GM13977 (cell line): ENCODE measurements at regions of chr11 and their contacts with region 1.

Region 1: GRCh38 chr11:46242916-46243795 is 34.3 kb upstream of the CREB3L1 start:
- DNase-seq: peak; percentile 96
- CTCF ChIP-seq: no peak

Region 2: GRCh38 chr11:46121724-46122477 is 121.3 kb before region 1 on chr11:
- in situ Hi-C with region 1: no loop called
- DNase-seq: peak; percentile 45
- CTCF ChIP-seq: no peak

Region 3: DNA sequence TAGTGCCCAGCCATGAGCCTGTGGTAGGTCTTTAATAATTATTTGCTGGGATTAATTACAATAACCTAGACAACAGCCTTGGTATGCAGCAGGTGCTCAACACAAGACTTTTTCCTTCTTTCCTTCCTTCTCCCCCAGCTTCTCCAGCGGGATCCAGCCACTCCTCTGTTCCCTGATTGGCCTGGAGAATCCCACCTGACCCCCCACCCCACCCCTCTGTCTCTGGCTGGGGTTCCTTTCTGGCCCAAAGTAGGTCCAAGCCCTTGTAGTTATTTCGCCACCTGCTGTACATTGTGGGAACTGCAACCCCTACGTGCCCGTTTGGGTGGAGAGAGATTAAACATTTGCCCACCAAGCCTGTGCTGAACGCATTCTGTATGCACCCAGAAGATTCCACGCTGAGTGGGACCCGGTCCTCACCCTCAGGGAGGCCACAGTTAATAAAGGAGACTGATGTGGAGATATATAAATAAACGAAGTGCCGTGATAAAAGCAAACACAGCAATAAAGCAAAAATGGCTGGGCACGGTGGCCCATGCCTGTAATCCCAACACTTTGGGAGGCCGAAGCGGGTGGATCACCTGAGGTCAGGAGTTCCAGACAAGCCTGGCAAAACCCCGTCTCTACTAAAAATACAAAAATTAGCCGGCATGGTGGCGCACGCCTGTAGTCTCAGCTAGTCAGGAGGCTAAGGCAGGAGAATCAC is 72.0 kb after region 1 on chr11:
- in situ Hi-C with region 1: loop called (anchors 5 kb)
- DNase-seq: peak; percentile 89
- CTCF ChIP-seq: peak; percentile 87